ENCODE measurements at regions of chr5 and their contacts with region 1.

Region 1: DNA sequence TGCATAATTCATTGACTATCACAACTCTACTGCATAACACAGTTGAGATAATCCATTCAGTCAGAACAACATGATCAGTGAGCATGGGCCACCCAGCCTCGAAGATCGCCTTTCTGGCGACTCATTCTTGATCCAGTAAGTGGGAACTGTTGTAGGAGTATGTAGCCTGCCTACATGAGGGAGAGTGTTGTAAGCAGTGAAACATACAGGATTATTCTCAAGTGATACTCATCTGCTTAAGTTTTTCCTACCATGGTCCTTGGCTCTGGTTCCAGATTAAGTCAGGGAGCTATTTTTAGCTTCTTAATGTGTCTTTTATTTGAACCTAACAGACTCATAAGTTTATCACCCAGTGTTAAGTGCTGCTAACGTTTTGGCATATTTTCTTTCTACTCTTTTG is 44.0 kb downstream of the TNPO1 start:
- DNase-seq: no peak
- ATAC-seq: no peak; the same call in 2 of the 3 replicates
- H3K4me3 ChIP-seq: no peak overlapping the region
- H3K27ac ChIP-seq: 0 out of 3 replicates have a peak overlapping the region, but pooled peaks have one; percentile 16
- H3K4me1 ChIP-seq: no peaks in the 10 kb centered on the region
- H3K27me3 ChIP-seq: no peaks in the 10 kb centered on the region
- CTCF ChIP-seq: no peak
- EP300 ChIP-seq: no peak
- POLR2A ChIP-seq: no peak
- RAD21 ChIP-seq: no peak

Region 2: GRCh38 chr5:72752909-72753308 is 107.6 kb before region 1 on chr5:
- CTCF ChIA-PET with region 1: no interaction called
- POLR2A ChIA-PET with region 1: no interaction called
- in situ Hi-C with region 1: no loop called
- intact Hi-C with region 1: no loop called
- DNase-seq: no peak
- ATAC-seq: no peak
- H3K4me3 ChIP-seq: no peak overlapping the region
- H3K27ac ChIP-seq: no peak overlapping the region
- H3K4me1 ChIP-seq: no peaks in the 10 kb centered on the region
- H3K27me3 ChIP-seq: peaks cover 2 to 9% of the 10 kb centered on the region in 2 experiments; a peak in 2 of 5 replicates
- CTCF ChIP-seq: no peak
- EP300 ChIP-seq: no peak
- POLR2A ChIP-seq: no peak
- RAD21 ChIP-seq: 0 out of 4 replicates have a peak, but pooled peaks of 1 of the 2 experiments have one; percentile 3

Region 3: GRCh38 chr5:72847989-72848473 is 12.5 kb before region 1 on chr5:
- CTCF ChIA-PET with region 1: no interaction called
- POLR2A ChIA-PET with region 1: interaction called, 15 read pairs
- in situ Hi-C with region 1: no loop called
- intact Hi-C with region 1: no loop called
- DNase-seq: peak; percentile 73 to 93 (median 80)
- ATAC-seq: peak; percentile 89
- H3K4me3 ChIP-seq: peak overlapping the region; percentile 72
- H3K27ac ChIP-seq: peak overlapping the region; percentile 94
- H3K4me1 ChIP-seq: peaks cover 0 to 13% of the 10 kb centered on the region in 2 experiments; a peak in 3 of 5 replicates
- H3K27me3 ChIP-seq: no peaks in the 10 kb centered on the region
- CTCF ChIP-seq: no peak
- EP300 ChIP-seq: peak; percentile 61
- POLR2A ChIP-seq: peak; percentile 99
- RAD21 ChIP-seq: no peak

Measured in K562 (cell line).